Aorta (tissue), 5 donors: ENCODE measurements at regions of chr16 and their contacts with region 1.

Region 1: DNA sequence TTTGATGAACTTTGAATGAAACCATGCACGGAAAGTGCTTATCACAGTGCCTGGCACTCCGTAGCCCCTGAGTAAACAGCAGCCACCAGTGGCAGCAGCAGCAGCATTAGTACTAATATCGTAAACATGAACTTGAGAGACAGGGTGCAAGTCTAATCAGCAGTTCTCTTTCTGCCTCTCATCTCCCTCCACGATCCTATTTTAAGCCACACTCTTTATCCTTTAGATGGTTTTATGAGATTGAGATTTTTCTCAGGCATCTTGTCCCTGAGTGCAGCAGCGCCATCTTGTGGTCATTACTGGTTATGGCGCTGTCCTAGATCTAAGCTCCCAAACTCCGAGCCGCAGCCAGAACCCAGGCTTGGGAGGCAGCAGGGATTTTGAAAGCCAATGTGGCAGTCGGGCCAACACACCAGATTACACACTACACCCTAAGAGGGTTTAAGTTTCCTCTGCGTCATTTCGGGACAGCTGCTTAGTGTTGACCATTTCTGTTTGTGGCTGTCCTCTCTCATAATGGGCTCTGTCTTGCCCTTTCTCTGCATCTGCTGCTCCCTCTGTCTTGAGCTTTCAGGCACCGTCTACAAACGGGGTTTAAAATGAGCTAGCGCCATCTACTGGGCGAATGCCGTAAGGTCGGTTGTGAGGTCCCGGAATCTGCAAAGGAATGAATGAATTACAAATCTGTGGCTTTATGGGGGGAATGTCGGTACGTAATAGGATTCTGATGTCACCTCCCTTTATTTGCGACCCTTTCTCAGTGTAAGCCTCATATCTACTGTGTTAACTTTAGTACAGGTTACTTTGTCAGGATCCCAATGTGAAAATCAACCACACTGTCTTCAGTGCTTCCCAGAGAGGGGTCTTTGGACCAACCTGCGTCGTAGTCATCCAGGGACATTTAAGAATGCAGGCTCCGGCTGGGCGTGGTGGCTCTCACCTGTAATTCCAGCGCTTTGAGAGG is 64.5 kb downstream of the CYLD start:
- DNase-seq: peak; percentile 86 to 89
- ATAC-seq: peak; percentile 95
- H3K4me3 ChIP-seq: no peak overlapping the region
- H3K27ac ChIP-seq: no peak overlapping the region
- H3K4me1 ChIP-seq: no peaks in the 10 kb centered on the region
- H3K27me3 ChIP-seq: no peaks in the 10 kb centered on the region

Region 2: GRCh38 chr16:50024684-50025536 is 781.5 kb before region 1 on chr16 and contains the start of gene CNEP1R1:
- intact Hi-C with region 1: loop called (anchors 5 to 10 kb)
- DNase-seq: peak; percentile 96 to 97
- ATAC-seq: peak; percentile 100
- H3K4me3 ChIP-seq: peak within 1 kb of the TSS; percentile 71 to 92
- H3K27ac ChIP-seq: peak within 1 kb of the TSS in 1 of 2 donors; percentile 20
- H3K4me1 ChIP-seq: no peaks in the 10 kb centered on the region
- H3K27me3 ChIP-seq: no peaks in the 10 kb centered on the region
- total RNA-seq, gene CNEP1R1: 25.0 to 25.3 TPM

Region 3: DNA sequence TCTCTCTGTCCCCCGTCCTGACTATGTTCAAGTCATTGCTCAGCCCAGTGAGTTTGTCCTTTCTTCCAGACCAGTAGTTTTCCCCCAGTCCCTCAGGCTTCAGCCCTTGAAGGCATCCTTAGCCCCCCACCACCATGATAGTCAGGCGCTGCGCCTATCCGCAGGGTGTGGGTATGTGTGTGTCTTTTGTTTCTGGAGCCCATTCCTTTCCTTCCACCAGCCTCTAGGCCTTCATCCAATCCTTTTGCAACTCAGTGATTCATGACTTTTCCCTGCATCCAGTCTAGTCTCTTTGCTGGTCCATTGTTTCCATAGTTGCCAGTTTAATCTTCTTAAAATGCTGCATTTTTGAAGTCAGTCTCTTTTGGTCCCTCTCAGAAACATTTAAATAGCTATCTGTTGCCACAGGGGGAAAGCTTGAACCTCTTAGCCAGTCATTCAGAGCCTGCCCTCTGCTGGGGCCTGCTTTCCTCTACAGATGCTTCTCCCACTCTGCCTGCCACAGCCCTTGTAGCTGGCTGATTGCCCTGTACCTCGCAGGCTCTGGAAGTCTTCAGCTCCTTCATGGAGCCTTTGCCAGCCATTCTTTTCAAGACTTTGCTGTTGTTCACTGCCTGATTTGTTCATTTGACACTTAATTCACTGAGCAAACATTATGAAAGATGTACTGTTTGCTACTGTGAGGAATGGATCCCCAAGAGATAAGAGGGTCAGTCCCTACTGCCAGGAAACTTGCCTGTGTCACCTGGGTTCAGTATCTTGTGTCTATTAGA is 595.9 kb before region 1 on chr16:
- intact Hi-C with region 1: loop called in 1 of 2 experiments (anchors 5 kb)
- DNase-seq: peak; percentile 87 to 89
- ATAC-seq: peak; percentile 89
- H3K4me3 ChIP-seq: no peak overlapping the region
- H3K27ac ChIP-seq: peak overlapping the region in 1 of 2 donors; percentile 32
- H3K4me1 ChIP-seq: peaks cover 0 to 3% of the 10 kb centered on the region in 2 donors
- H3K27me3 ChIP-seq: no peaks in the 10 kb centered on the region

Region 4: GRCh38 chr16:50671644-50672260 is 134.6 kb before region 1 on chr16:
- intact Hi-C with region 1: loop called (anchors 5 to 10 kb)
- DNase-seq: peak in 1 of 2 donors; percentile 11
- ATAC-seq: no peak
- H3K4me3 ChIP-seq: no peak overlapping the region
- H3K27ac ChIP-seq: no peak overlapping the region
- H3K4me1 ChIP-seq: no peaks in the 10 kb centered on the region
- H3K27me3 ChIP-seq: no peaks in the 10 kb centered on the region

Region 5: DNA sequence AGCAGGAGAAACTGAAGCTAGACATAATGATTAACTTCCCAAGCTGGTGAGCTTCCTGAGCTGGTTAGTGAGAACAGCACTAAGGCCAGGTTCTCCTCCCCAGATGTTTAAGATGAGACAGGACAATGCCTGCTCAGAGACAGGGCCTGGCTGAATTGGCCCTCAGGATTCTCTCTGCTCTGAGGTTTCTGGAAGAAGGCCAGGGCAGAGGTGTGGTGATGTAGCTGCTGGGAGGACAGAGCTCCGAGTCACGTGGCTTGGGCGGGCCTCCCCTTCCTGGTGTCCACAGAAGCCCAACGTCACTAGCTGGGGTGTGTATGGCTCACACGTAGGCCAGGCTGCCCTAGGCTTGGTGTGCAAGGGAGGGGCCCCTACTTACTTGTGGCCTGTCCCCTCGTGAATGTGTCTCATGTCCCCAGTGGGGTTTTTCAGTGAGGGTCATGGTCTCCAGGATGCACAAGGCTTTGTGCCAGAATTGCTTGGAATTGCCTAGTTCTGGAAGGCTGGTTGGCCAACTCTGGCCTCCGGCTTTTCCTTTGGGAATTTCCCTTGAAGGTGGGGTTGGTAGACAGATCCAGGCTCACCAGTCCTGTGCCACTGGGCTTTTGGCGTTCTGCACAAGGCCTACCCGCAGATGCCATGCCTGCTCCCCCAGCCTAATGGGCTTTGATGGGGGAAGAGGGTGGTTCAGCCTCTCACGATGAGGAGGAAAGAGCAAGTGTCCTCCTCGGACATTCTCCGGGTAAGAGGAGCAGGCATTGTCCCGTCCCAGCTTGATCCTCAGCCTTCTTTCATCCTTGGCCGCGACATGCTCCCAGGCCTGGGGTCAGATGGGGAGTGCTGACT is 109.6 kb before region 1 on chr16:
- intact Hi-C with region 1: loop called in 1 of 2 experiments (anchors 10 kb)
- DNase-seq: peak; percentile 89 to 92
- ATAC-seq: peak; percentile 63
- H3K4me3 ChIP-seq: no peak overlapping the region
- H3K27ac ChIP-seq: no peak overlapping the region
- H3K4me1 ChIP-seq: no peaks in the 10 kb centered on the region
- H3K27me3 ChIP-seq: no peaks in the 10 kb centered on the region